Left lung (tissue), 14 donors: ENCODE measurements at regions of chr20 and their contacts with region 1.

Region 1: DNA sequence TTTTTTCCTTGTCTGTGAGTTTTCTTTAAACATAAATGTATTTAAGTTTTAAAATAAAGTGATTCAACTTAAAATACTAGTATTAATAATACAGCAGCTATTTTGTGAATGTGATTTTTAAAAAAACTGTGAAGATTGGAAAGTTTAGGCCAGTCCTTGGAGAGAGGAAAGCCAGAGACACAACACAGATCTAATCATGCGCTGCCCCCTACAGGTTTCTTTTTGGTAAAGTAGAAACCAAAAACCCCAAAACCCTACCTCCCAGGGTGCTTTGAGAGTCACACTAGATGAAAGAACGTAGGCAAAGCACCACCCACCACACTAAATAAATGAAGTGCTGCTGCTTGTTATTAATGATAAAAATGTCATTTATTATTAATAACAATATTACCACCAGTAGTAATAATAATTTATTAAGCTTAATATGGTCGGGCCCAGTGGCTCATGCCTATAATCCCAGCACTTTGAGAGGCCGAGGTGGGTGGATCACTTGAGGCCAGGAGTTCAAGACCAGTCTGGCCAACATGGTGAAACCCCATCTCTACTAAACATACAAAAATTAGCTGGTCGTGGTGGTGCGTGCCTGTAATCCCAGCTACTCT is 33.7 kb downstream of the SLC9A8 start:
- DNase-seq: peak in 1 of 4 donors; percentile 60
- ATAC-seq: peak; percentile 89
- H3K4me3 ChIP-seq: no peak overlapping the region
- H3K27ac ChIP-seq: peak overlapping the region in 1 of 2 donors; percentile 46
- H3K4me1 ChIP-seq: peaks cover 0 to 40% of the 10 kb centered on the region in 2 donors
- H3K27me3 ChIP-seq: no peaks in the 10 kb centered on the region
- CTCF ChIP-seq: peak; percentile 43 to 74

Region 2: GRCh38 chr20:49541733-49542513 is 304.4 kb before region 1 on chr20:
- intact Hi-C with region 1: loop called in 1 of 2 experiments (anchors 10 kb)
- DNase-seq: peak in 3 of 4 donors; percentile 33 to 70 (median 53)
- ATAC-seq: peak; percentile 86
- H3K4me3 ChIP-seq: no peak overlapping the region
- H3K27ac ChIP-seq: no peak overlapping the region
- H3K4me1 ChIP-seq: no peaks in the 10 kb centered on the region
- H3K27me3 ChIP-seq: no peaks in the 10 kb centered on the region
- CTCF ChIP-seq: peak; percentile 58 to 75

Region 3: GRCh38 chr20:49610701-49611538 is 235.4 kb before region 1 on chr20:
- intact Hi-C with region 1: loop called (anchors 5 to 10 kb)
- DNase-seq: peak in 3 of 4 donors; percentile 73 to 97 (median 78)
- ATAC-seq: peak; percentile 96
- H3K4me3 ChIP-seq: peak overlapping the region; percentile 5 to 16
- H3K27ac ChIP-seq: no peak overlapping the region
- H3K4me1 ChIP-seq: peaks cover 3 to 32% of the 10 kb centered on the region in 2 donors
- H3K27me3 ChIP-seq: peaks cover 0 to 9% of the 10 kb centered on the region in 2 donors
- CTCF ChIP-seq: peak; percentile 100

Region 4: GRCh38 chr20:49766979-49767521 is 79.3 kb before region 1 on chr20:
- intact Hi-C with region 1: no loop called
- DNase-seq: no peak
- ATAC-seq: no peak
- H3K4me3 ChIP-seq: no peak overlapping the region
- H3K27ac ChIP-seq: peak overlapping the region in 1 of 2 donors; percentile 89
- H3K4me1 ChIP-seq: peaks cover 32 to 83% of the 10 kb centered on the region in 2 donors
- H3K27me3 ChIP-seq: no peaks in the 10 kb centered on the region
- CTCF ChIP-seq: no peak

Region 5: DNA sequence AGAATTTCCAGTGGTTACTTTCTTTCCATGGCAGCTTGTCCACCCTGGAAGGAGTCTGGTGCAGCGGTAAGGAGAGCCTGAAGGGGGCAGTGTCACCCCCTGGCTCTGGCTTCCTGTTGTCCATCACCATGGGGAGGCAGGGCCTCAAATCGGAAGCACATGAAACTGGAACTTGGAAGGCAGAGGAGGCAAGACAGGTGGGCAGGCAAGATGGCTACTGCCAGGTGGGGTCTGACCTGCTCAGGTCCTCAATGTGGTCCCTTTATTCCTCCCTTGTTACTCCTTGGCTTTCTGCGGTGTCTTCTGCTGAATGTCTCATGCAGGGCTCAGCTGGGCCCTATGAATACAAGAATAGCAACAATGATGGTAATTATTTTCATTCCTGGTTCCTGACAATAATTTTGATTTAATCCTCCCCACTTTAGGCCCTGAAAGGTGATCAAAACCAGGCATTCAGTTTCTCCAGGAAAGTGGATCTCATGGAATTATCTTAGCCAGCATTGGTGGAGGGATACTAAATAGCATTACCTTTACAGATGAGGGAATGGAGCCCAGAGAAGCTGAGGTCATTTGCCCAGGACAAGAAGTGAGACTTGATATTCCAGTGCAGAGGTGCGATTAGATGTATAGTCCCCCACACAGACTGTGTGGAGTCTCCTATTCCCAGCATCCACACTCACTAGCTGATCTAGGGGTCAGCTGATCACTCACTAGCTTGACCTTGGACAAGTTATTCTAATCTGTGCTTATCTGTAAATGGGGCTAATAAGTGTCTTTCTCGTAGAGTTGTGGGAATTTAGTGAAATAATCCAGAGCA is 118.9 kb after region 1 on chr20:
- intact Hi-C with region 1: no loop called
- DNase-seq: no peak
- ATAC-seq: peak; percentile 77
- H3K4me3 ChIP-seq: no peak overlapping the region
- H3K27ac ChIP-seq: no peak overlapping the region
- H3K4me1 ChIP-seq: peaks cover 0 to 19% of the 10 kb centered on the region in 2 donors
- H3K27me3 ChIP-seq: no peaks in the 10 kb centered on the region
- CTCF ChIP-seq: peak; percentile 38 to 58